PC-9 (cell line): ENCODE measurements at regions of chr7 and their contacts with region 1.

Region 1: GRCh38 chr7:54967384-54967783 is 51.4 kb upstream of the EGFR start:
- DNase-seq: peak; percentile 92 to 100
- H3K4me3 ChIP-seq: peak overlapping the region; percentile 2; the same call in 1 of the 2 replicates
- H3K27ac ChIP-seq: peak overlapping the region; percentile 89
- H3K4me1 ChIP-seq: peaks cover 50% of the 10 kb centered on the region
- H3K27me3 ChIP-seq: no peaks in the 10 kb centered on the region
- CTCF ChIP-seq: no peak

Region 2: DNA sequence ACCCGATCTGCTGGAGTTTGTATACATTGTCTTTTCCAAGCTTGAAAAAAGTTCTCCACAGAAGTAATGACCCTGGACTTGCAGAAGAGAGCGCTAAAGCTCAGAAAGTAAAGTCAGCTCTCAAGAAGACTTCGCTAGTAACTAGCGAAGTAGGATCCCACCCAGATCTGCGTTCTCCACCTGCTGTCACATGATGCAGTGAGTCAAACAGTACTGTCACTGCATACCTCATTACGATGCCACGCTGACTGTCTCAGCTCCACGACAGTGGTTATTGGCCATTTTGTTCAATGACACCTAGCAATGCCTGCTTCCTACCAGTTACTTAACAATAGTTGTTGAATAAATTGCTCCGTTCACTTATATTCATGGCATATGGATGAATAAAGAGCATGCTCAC is 178.7 kb before region 1 on chr7:
- CTCF ChIA-PET with region 1: no interaction called
- POLR2A ChIA-PET with region 1: no interaction called
- intact Hi-C with region 1: loop called (anchors 1 kb)
- DNase-seq: peak; percentile 79 to 99
- H3K4me3 ChIP-seq: no peak overlapping the region
- H3K27ac ChIP-seq: peak overlapping the region; percentile 27
- H3K4me1 ChIP-seq: peaks cover 29% of the 10 kb centered on the region
- H3K27me3 ChIP-seq: no peaks in the 10 kb centered on the region
- CTCF ChIP-seq: peak; percentile 95

Region 3: DNA sequence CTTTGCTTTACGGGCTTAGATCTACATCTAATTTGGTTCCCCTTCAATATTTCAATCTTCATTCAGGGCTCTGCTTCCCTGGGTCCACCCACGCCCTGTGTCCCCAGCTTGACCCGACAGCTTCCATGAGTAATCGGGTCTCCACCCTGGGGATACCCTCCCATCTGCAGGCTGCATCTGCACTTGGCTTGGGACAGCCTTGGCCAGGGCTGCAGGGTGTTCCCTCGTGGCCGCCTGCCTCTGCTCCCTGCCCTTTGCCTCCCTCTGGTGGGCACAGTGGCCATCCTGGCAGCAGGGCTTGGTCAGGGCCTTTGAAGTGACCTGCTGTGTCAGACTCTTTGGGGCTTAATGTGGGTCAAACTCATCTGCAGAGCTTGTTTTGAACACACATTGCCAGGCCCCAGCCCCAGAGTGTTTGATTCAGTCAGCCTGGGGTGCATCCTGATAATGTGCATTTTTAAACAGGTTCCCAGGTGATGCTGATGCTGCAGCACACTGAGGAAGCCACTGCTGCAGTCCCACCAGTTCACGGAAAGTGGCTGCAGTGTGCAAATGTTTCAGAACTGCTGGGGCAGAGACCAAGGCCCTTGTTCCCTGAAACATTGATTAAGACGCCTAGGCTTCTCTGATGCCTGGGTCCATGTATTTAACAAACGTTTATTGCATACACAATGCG is 127.7 kb before region 1 on chr7:
- CTCF ChIA-PET with region 1: no interaction called
- POLR2A ChIA-PET with region 1: interaction called, 5 read pairs
- intact Hi-C with region 1: loop called (anchors 2 kb)
- DNase-seq: peak; percentile 91 to 95
- H3K4me3 ChIP-seq: 0 out of 2 replicates have a peak overlapping the region, but pooled peaks have one; percentile 2
- H3K27ac ChIP-seq: peak overlapping the region; percentile 51
- H3K4me1 ChIP-seq: peaks cover 48% of the 10 kb centered on the region
- H3K27me3 ChIP-seq: no peaks in the 10 kb centered on the region
- CTCF ChIP-seq: peak; percentile 100

Region 4: GRCh38 chr7:54932818-54933543 is 34.4 kb before region 1 on chr7:
- CTCF ChIA-PET with region 1: no interaction called
- POLR2A ChIA-PET with region 1: interaction called, 14 read pairs
- intact Hi-C with region 1: loop called (anchors 2 kb)
- DNase-seq: peak; percentile 74 to 91
- H3K4me3 ChIP-seq: peak overlapping the region; percentile 60
- H3K27ac ChIP-seq: no peak overlapping the region
- H3K4me1 ChIP-seq: peaks cover 14% of the 10 kb centered on the region
- H3K27me3 ChIP-seq: no peaks in the 10 kb centered on the region
- CTCF ChIP-seq: no peak

Region 5: GRCh38 chr7:54978364-54979118 is 11.2 kb after region 1 on chr7:
- CTCF ChIA-PET with region 1: no interaction called
- POLR2A ChIA-PET with region 1: interaction called, 16 read pairs
- intact Hi-C with region 1: no loop called
- DNase-seq: no peak
- H3K4me3 ChIP-seq: no peak overlapping the region
- H3K27ac ChIP-seq: no peak overlapping the region
- H3K4me1 ChIP-seq: no peaks in the 10 kb centered on the region
- H3K27me3 ChIP-seq: no peaks in the 10 kb centered on the region
- CTCF ChIP-seq: no peak

Region 6: GRCh38 chr7:54995631-54996340 is 28.4 kb after region 1 on chr7:
- CTCF ChIA-PET with region 1: interaction called, 3 read pairs
- POLR2A ChIA-PET with region 1: interaction called, 6 read pairs
- intact Hi-C with region 1: loop called (anchors 1 kb)
- DNase-seq: peak; percentile 71 to 99
- H3K4me3 ChIP-seq: peak overlapping the region; percentile 13
- H3K27ac ChIP-seq: peak overlapping the region; percentile 89
- H3K4me1 ChIP-seq: peaks cover 56% of the 10 kb centered on the region
- H3K27me3 ChIP-seq: no peaks in the 10 kb centered on the region
- CTCF ChIP-seq: peak; percentile 9; the same call in 1 of the 2 replicates

Region 7: GRCh38 chr7:55255496-55256435 is 288.4 kb after region 1 on chr7:
- CTCF ChIA-PET with region 1: no interaction called
- POLR2A ChIA-PET with region 1: no interaction called
- intact Hi-C with region 1: loop called (anchors 2 kb)
- DNase-seq: peak; percentile 81 to 96
- H3K4me3 ChIP-seq: peak overlapping the region; percentile 64
- H3K27ac ChIP-seq: no peak overlapping the region
- H3K4me1 ChIP-seq: peaks cover 5% of the 10 kb centered on the region
- H3K27me3 ChIP-seq: no peaks in the 10 kb centered on the region
- CTCF ChIP-seq: peak; percentile 99